ENCODE measurements at regions of chr6 and their contacts with region 1.

Region 1: GRCh38 chr6:118042855-118043254 is 135.8 kb downstream of the SLC35F1 start:
- DNase-seq: no peak
- ATAC-seq: no peak
- H3K4me3 ChIP-seq: no peak overlapping the region
- H3K27ac ChIP-seq: no peak overlapping the region
- H3K4me1 ChIP-seq: no peaks in the 10 kb centered on the region
- H3K27me3 ChIP-seq: no peaks in the 10 kb centered on the region
- CTCF ChIP-seq: no peak

Region 2: DNA sequence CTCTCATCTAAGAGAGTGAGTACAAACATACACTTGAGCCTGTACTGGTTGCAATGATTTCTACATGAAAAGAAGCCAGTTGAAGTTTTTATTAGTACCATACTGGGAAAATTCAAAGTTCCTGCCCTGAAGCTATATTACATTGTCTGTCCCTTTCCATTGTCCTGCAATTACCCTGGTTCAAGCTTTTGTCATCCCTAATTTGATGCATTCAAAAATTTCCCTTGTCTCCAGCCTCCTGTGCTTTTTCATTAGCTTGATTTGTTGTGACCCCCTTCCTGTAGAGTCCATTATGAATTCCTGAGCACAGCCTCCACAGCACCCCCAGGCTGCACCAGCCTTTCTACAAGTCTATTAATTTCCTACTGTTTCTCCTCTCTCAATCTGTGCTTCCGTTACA is 731.1 kb before region 1 on chr6:
- CTCF ChIA-PET with region 1: no interaction called
- POLR2A ChIA-PET with region 1: no interaction called
- in situ Hi-C with region 1: no loop called
- intact Hi-C with region 1: loop called (anchors 5 kb)
- DNase-seq: no peak
- ATAC-seq: no peak
- H3K4me3 ChIP-seq: no peak overlapping the region
- H3K27ac ChIP-seq: no peak overlapping the region
- H3K4me1 ChIP-seq: no peaks in the 10 kb centered on the region
- H3K27me3 ChIP-seq: 0 out of 2 replicates have a peak, but pooled peaks cover 2% of the 10 kb centered on the region
- CTCF ChIP-seq: no peak